Right ventricle myocardium superior (tissue), 1 donor: ENCODE measurements at regions of chr5 and their contacts with region 1.

Region 1: DNA sequence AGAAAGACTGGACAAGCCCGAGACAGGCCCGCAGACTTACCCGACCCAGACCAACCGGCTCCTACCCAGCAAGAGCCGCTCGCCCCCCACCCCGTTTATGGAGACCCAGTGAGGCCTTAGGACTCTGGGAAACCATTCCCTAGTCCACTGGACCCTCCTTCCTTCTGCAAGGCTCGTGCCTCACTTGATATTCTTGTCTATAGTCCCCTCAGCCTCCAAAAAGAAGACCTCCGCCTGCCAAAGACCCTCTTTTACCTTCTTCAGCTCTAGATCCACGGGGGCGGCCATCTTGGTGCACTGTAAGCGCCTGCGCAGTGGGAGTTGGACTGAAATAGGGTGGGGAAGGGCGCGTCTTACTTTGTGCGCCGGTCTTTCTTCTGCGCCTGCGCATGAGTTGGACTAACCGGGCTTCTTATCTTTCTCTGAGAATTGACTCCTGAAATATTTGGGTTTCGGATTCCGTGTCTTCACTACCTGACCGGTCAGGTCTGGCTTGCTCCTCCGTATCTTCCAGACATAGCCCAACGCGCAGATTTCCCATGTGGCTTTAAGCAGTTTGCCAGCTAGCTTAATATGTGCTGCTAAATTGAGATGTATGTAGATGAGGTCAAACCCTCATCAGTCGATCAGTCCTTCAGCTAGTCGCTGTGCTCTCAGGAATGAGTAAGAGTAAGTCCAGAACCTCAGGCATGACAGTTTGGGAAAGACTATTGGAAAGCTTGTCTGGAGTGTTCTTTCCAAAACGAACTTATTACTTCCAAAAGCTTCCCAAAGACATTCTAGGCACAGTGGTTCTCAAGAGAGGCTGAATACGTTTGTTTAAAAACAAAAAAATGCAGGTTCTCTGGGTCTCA is at the start of gene PFDN1:
- DNase-seq: peak; percentile 96
- ATAC-seq: peak; percentile 99
- total RNA-seq, gene PFDN1: 68.7 TPM

Region 2: DNA sequence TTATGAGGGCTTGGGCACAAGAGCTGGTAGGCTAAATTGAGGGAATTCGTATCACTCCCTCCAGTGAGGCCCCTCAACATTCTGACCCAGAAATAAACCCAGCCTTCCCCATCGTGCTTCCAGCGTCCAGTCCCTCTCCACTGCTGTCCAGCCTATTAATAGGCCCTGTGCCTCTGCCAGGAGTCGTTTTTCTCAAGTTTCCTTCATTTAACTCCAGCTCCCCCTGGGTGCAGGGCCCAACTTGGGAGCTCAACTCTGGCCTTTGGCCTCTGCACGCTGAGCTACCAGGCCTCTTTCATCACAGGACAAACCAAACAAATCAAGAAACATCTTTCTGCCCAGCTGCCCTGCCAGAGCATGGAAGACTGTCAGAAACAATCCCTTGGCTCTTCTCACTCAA is 33.4 kb after region 1 on chr5:
- intact Hi-C with region 1: loop called (anchors 5 kb)
- DNase-seq: peak; percentile 51
- ATAC-seq: peak; percentile 59